ENCODE measurements at regions of chr7 and their contacts with region 1.

Region 1: GRCh38 chr7:151226875-151227782 is at the start of gene ABCF2:
- DNase-seq: peak; percentile 99 to 100 (median 100)
- ATAC-seq: peak; percentile 99
- H3K4me3 ChIP-seq: peak within 1 kb of the TSS; percentile 82
- H3K27ac ChIP-seq: peak within 1 kb of the TSS; percentile 67
- H3K4me1 ChIP-seq: peaks cover 26 to 27% of the 10 kb centered on the region in 2 experiments; a peak in 4 of 5 replicates
- H3K27me3 ChIP-seq: no peaks in the 10 kb centered on the region
- CTCF ChIP-seq: peak in 1 of 3 experiments; percentile 15; a peak in 1 of 6 replicates
- EP300 ChIP-seq: peak; percentile 37
- POLR2A ChIP-seq: peak; percentile 91
- RAD21 ChIP-seq: no peak
- polyA plus RNA-seq, gene ABCF2: 103 to 224 TPM

Region 2: GRCh38 chr7:151212626-151213025 is 14.5 kb before region 1 on chr7:
- CTCF ChIA-PET with region 1: no interaction called
- POLR2A ChIA-PET with region 1: interaction called, 30 read pairs
- in situ Hi-C with region 1: no loop called
- intact Hi-C with region 1: no loop called
- DNase-seq: no peak
- ATAC-seq: no peak
- H3K4me3 ChIP-seq: no peak overlapping the region
- H3K27ac ChIP-seq: no peak overlapping the region
- H3K4me1 ChIP-seq: peaks cover 4% of the 10 kb centered on the region in 2 experiments
- H3K27me3 ChIP-seq: no peaks in the 10 kb centered on the region
- CTCF ChIP-seq: no peak
- EP300 ChIP-seq: no peak
- POLR2A ChIP-seq: no peak
- RAD21 ChIP-seq: no peak

Region 3: DNA sequence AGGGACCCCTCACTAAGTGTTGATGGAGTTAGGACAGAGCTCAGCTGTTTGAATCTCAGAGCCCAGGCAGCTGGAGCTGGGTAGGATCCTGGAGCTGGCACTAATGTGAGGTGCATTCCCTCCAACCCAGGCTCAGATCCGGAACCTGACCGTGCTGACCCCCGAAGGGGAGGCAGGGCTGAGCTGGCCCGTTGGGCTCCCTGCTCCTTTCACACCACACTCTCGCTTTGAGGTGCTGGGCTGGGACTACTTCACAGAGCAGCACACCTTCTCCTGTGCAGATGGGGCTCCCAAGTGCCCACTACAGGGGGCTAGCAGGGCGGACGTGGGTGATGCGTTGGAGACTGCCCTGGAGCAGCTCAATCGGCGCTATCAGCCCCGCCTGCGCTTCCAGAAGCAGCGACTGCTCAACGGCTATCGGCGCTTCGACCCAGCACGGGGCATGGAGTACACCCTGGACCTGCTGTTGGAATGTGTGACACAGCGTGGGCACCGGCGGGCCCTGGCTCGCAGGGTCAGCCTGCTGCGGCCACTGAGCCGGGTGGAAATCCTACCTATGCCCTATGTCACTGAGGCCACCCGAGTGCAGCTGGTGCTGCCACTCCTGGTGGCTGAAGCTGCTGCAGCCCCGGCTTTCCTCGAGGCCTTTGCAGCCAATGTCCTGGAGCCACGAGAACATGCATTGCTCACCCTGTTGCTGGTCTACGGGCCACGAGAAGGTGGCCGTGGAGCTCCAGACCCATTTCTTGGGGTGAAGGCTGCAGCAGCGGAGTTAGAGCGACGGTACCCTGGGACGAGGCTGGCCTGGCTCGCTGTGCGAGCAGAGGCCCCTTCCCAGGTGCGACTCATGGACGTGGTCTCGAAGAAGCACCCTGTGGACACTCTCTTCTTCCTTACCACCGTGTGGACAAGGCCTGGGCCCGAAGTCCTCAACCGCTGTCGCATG is 10.4 kb after region 1 on chr7:
- CTCF ChIA-PET with region 1: interaction called, 3 read pairs
- POLR2A ChIA-PET with region 1: interaction called, 36 read pairs
- in situ Hi-C with region 1: no loop called
- intact Hi-C with region 1: no loop called
- DNase-seq: no peak
- ATAC-seq: no peak
- H3K4me3 ChIP-seq: no peak overlapping the region
- H3K27ac ChIP-seq: no peak overlapping the region
- H3K4me1 ChIP-seq: peaks cover 17 to 45% of the 10 kb centered on the region in 2 experiments; a peak in 4 of 5 replicates
- H3K27me3 ChIP-seq: no peaks in the 10 kb centered on the region
- CTCF ChIP-seq: no peak
- EP300 ChIP-seq: no peak
- POLR2A ChIP-seq: no peak
- RAD21 ChIP-seq: no peak

Region 4: GRCh38 chr7:151400626-151401315 is 173.6 kb after region 1 on chr7:
- CTCF ChIA-PET with region 1: no interaction called
- POLR2A ChIA-PET with region 1: no interaction called
- in situ Hi-C with region 1: no loop called
- intact Hi-C with region 1: no loop called
- DNase-seq: no peak
- ATAC-seq: no peak
- H3K4me3 ChIP-seq: no peak overlapping the region
- H3K27ac ChIP-seq: no peak overlapping the region
- H3K4me1 ChIP-seq: peaks cover 31 to 53% of the 10 kb centered on the region in 2 experiments
- H3K27me3 ChIP-seq: no peaks in the 10 kb centered on the region; a peak in 1 of 5 replicates
- CTCF ChIP-seq: no peak
- EP300 ChIP-seq: no peak
- POLR2A ChIP-seq: no peak
- RAD21 ChIP-seq: no peak